GM12878 (cell line): ENCODE measurements at regions of chr9 and their contacts with region 1.

Region 1: GRCh38 chr9:89549031-89549644 is 51.2 kb upstream of the SEMA4D start:
- DNase-seq: peak; percentile 62
- ATAC-seq: peak; percentile 100
- H3K4me3 ChIP-seq: no peak overlapping the region
- H3K27ac ChIP-seq: no peak overlapping the region
- H3K4me1 ChIP-seq: peaks cover 10% of the 10 kb centered on the region
- H3K27me3 ChIP-seq: no peaks in the 10 kb centered on the region
- CTCF ChIP-seq: peak; percentile 91 to 95 (median 93)
- EP300 ChIP-seq: no peak
- POLR2A ChIP-seq: no peak
- RAD21 ChIP-seq: peak; percentile 92

Region 2: GRCh38 chr9:88291856-88292255 is 1257.3 kb before region 1 on chr9:
- CTCF ChIA-PET with region 1: no interaction called
- POLR2A ChIA-PET with region 1: no interaction called
- RAD21 ChIA-PET with region 1: no interaction called
- SMC1A ChIA-PET with region 1: no interaction called
- in situ Hi-C with region 1: no loop called
- intact Hi-C with region 1: no loop called
- DNase-seq: no peak
- ATAC-seq: no peak
- H3K4me3 ChIP-seq: no peak overlapping the region
- H3K27ac ChIP-seq: no peak overlapping the region
- H3K4me1 ChIP-seq: no peaks in the 10 kb centered on the region
- H3K27me3 ChIP-seq: no peaks in the 10 kb centered on the region
- CTCF ChIP-seq: no peak
- EP300 ChIP-seq: no peak
- POLR2A ChIP-seq: no peak
- RAD21 ChIP-seq: no peak

Region 3: GRCh38 chr9:89247431-89248353 is 301.4 kb before region 1 on chr9:
- CTCF ChIA-PET with region 1: no interaction called
- POLR2A ChIA-PET with region 1: no interaction called
- RAD21 ChIA-PET with region 1: no interaction called
- SMC1A ChIA-PET with region 1: no interaction called
- in situ Hi-C with region 1: no loop called
- intact Hi-C with region 1: no loop called
- DNase-seq: no peak
- ATAC-seq: no peak
- H3K4me3 ChIP-seq: no peak overlapping the region
- H3K27ac ChIP-seq: no peak overlapping the region
- H3K4me1 ChIP-seq: no peaks in the 10 kb centered on the region
- H3K27me3 ChIP-seq: peaks cover 0 to 2% of the 10 kb centered on the region in 2 experiments; a peak in 1 of 4 replicates
- CTCF ChIP-seq: no peak
- EP300 ChIP-seq: no peak
- POLR2A ChIP-seq: no peak
- RAD21 ChIP-seq: no peak

Region 4: GRCh38 chr9:89323390-89323789 is 225.7 kb before region 1 on chr9:
- CTCF ChIA-PET with region 1: interaction called, 11 read pairs
- POLR2A ChIA-PET with region 1: interaction called, 5 read pairs
- RAD21 ChIA-PET with region 1: interaction called, 12 read pairs
- SMC1A ChIA-PET with region 1: interaction called, 23 read pairs
- in situ Hi-C with region 1: no loop called
- intact Hi-C with region 1: loop called (anchors 2 kb)
- DNase-seq: no peak
- ATAC-seq: no peak
- H3K4me3 ChIP-seq: no peak overlapping the region; the same call in 1 of the 2 replicates
- H3K27ac ChIP-seq: no peak overlapping the region; the same call in 1 of the 2 replicates
- H3K4me1 ChIP-seq: no peaks in the 10 kb centered on the region
- H3K27me3 ChIP-seq: no peaks in the 10 kb centered on the region
- CTCF ChIP-seq: no peak
- EP300 ChIP-seq: no peak
- POLR2A ChIP-seq: no peak
- RAD21 ChIP-seq: no peak

Region 5: GRCh38 chr9:89400403-89401116 is 148.6 kb before region 1 on chr9:
- CTCF ChIA-PET with region 1: interaction called, 28 read pairs
- POLR2A ChIA-PET with region 1: interaction called, 6 read pairs
- RAD21 ChIA-PET with region 1: interaction called, 58 read pairs
- SMC1A ChIA-PET with region 1: interaction called, 34 read pairs
- in situ Hi-C with region 1: no loop called
- intact Hi-C with region 1: no loop called
- DNase-seq: no peak
- ATAC-seq: peak; percentile 93
- H3K4me3 ChIP-seq: peak overlapping the region; percentile 33; the same call in 1 of the 2 replicates
- H3K27ac ChIP-seq: peak overlapping the region; percentile 72
- H3K4me1 ChIP-seq: peaks cover 39% of the 10 kb centered on the region
- H3K27me3 ChIP-seq: no peaks in the 10 kb centered on the region
- CTCF ChIP-seq: no peak
- EP300 ChIP-seq: peak in 1 of 2 experiments; percentile 28; a peak in 1 of 4 replicates
- POLR2A ChIP-seq: no peak
- RAD21 ChIP-seq: no peak

Region 6: DNA sequence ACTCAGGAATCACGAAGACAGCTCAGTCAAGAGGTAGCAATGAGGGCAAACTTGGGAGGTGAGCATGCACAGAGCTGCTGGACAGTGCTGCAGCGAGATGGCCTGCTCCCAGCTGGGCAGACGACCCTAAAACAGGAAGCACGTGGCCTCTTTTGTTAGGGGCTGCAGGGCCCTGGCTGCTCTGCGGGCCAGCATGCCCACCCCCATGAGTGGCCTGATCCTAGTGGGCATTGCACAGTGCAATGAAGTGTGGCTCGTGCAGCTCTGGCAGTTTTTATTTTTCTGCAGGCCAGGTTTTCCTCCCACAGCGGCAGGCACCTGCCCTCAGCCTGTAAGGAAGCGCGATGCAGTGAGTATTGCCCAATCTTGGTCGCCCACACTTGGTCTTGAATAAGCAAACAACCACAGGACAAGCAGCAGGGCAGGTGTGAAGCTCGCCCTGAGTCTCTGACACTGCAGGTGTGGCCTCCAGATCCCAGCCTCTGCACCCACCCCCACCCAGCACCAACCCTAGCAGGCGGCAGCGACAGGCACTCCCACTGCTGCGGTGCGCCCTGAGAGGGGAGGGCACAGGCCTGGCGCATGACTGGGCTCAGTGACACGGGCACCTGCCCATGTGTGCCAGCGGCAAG is 112.0 kb before region 1 on chr9:
- CTCF ChIA-PET with region 1: interaction called, 207 read pairs
- POLR2A ChIA-PET with region 1: interaction called, 6 read pairs
- RAD21 ChIA-PET with region 1: interaction called, 119 read pairs
- SMC1A ChIA-PET with region 1: interaction called, 150 read pairs
- in situ Hi-C with region 1: no loop called
- intact Hi-C with region 1: no loop called
- DNase-seq: no peak
- ATAC-seq: peak; percentile 25
- H3K4me3 ChIP-seq: no peak overlapping the region
- H3K27ac ChIP-seq: peak overlapping the region; percentile 42; the same call in 1 of the 2 replicates
- H3K4me1 ChIP-seq: peaks cover 86% of the 10 kb centered on the region
- H3K27me3 ChIP-seq: no peaks in the 10 kb centered on the region
- CTCF ChIP-seq: no peak
- EP300 ChIP-seq: no peak; a peak in 1 of 4 replicates
- POLR2A ChIP-seq: peak; percentile 42; the same call in 1 of the 2 replicates
- RAD21 ChIP-seq: no peak

Region 7: DNA sequence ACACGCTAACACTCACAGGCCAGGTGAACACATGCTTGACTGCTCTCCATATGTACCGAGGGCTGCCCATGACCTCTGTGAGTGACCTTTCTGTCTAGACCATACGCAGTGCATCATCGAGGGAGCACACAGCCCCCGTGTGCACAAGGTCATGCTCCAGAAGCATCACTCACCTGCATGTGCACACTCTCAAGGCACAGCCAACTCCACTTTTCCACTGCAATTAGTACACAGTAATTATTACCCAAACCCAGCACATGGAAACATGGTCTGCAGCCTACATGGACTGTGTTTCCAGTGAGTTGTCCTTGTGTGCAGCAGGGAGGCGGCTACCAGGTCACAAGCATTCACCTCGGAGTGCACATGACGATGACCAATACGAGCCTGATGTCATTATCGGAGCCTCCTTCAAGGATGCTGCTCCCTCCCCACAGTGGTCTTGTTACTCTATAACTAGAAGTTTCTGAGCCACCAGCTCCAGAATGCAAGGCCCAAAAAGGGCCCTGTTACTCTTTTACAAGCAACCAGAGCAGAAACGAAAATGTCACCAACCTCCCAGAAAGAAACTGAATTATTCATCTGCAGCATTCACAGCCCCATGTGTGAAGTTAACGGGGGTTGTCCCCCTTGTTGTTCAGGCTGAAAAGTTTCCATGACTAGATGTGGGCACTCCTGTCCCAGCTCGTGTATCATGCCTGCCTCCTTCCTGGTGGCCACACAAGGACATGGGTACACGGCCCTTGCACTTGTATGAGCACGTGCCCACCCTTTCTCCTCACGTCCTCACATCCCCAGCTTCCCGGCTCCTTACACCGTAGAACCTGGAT is 82.5 kb before region 1 on chr9:
- CTCF ChIA-PET with region 1: interaction called, 27 read pairs
- POLR2A ChIA-PET with region 1: no interaction called
- RAD21 ChIA-PET with region 1: interaction called, 32 read pairs
- SMC1A ChIA-PET with region 1: interaction called, 22 read pairs
- in situ Hi-C with region 1: no loop called
- intact Hi-C with region 1: loop called (anchors 1 kb)
- DNase-seq: peak; percentile 83
- ATAC-seq: peak; percentile 74
- H3K4me3 ChIP-seq: peak overlapping the region; percentile 55; the same call in 1 of the 2 replicates
- H3K27ac ChIP-seq: peak overlapping the region; percentile 99
- H3K4me1 ChIP-seq: peaks cover 88% of the 10 kb centered on the region
- H3K27me3 ChIP-seq: no peaks in the 10 kb centered on the region
- CTCF ChIP-seq: no peak
- EP300 ChIP-seq: peak; percentile 42 to 48; a peak in 1 of 4 replicates
- POLR2A ChIP-seq: 0 out of 2 replicates have a peak, but pooled peaks have one; percentile 31
- RAD21 ChIP-seq: no peak

Region 8: DNA sequence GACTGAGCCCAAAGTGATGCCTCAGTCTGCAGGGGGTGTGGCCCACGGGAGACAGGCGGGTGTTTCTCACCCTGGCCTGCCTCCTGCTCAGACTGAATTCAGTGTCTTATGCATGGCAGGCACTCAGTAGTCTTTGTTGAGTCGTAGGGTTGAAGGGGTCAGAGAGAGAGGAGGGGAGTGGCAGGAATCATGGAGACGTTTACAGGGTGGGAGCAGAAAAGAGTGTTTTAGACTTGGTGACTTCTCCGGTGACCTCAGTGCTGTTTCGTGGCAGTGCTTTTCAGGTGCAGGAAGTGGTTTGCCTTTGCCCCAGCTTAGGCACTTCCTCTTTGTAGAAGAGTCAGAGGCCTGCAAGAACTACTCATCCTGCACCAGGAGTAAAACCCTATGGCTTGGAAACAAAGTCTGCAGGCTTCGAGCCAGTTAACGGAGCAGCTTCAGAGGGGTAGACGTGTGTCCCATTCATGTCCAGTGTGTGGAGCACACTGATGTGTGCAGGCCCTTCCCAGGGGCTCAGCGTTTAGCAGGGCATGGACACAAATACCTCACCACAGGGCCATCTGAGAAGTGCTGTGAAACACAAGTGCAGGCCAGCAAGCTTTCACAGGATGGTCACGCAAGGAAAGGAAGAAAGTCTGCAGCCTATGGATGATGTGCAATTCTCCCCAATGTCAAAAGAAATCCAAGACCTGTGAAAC is 26.7 kb before region 1 on chr9:
- CTCF ChIA-PET with region 1: interaction called, 34 read pairs
- POLR2A ChIA-PET with region 1: no interaction called
- RAD21 ChIA-PET with region 1: interaction called, 28 read pairs
- SMC1A ChIA-PET with region 1: interaction called, 27 read pairs
- in situ Hi-C with region 1: no loop called
- intact Hi-C with region 1: no loop called
- DNase-seq: peak; percentile 83
- ATAC-seq: peak; percentile 95
- H3K4me3 ChIP-seq: peak overlapping the region; percentile 24; the same call in 1 of the 2 replicates
- H3K27ac ChIP-seq: peak overlapping the region; percentile 85
- H3K4me1 ChIP-seq: peaks cover 49% of the 10 kb centered on the region
- H3K27me3 ChIP-seq: no peaks in the 10 kb centered on the region
- CTCF ChIP-seq: no peak
- EP300 ChIP-seq: 0 out of 4 replicates have a peak, but pooled peaks of 1 of the 2 experiments have one; percentile 49
- POLR2A ChIP-seq: peak; percentile 51; the same call in 1 of the 2 replicates
- RAD21 ChIP-seq: no peak

Region 9: GRCh38 chr9:89623925-89624420 is 74.8 kb after region 1 on chr9:
- CTCF ChIA-PET with region 1: no interaction called
- POLR2A ChIA-PET with region 1: no interaction called
- RAD21 ChIA-PET with region 1: no interaction called
- SMC1A ChIA-PET with region 1: no interaction called
- in situ Hi-C with region 1: no loop called
- intact Hi-C with region 1: no loop called
- DNase-seq: no peak
- ATAC-seq: no peak
- H3K4me3 ChIP-seq: no peak overlapping the region
- H3K27ac ChIP-seq: no peak overlapping the region
- H3K4me1 ChIP-seq: no peaks in the 10 kb centered on the region
- H3K27me3 ChIP-seq: peaks cover 3 to 8% of the 10 kb centered on the region in 2 experiments
- CTCF ChIP-seq: no peak
- EP300 ChIP-seq: no peak
- POLR2A ChIP-seq: no peak
- RAD21 ChIP-seq: no peak